ENCODE measurements at regions of chr10 and their contacts with region 1.

Region 1: GRCh38 chr10:49164559-49165188 is 23.5 kb downstream of the TMEM273 start:
- DNase-seq: no peak
- H3K4me3 ChIP-seq: no peak overlapping the region
- H3K4me3 Mint-ChIP-seq: no peak overlapping the region
- H3K27ac ChIP-seq: no peak overlapping the region
- H3K27ac Mint-ChIP-seq: peak overlapping the region in 3 of 7 donors; percentile 33 to 53 (median 33)
- H3K4me1 ChIP-seq: peaks cover 6% of the 10 kb centered on the region
- H3K4me1 Mint-ChIP-seq: peaks cover 2 to 26% (median 11%) of the 10 kb centered on the region in 4 donors
- H3K27me3 ChIP-seq: no peaks in the 10 kb centered on the region
- H3K27me3 Mint-ChIP-seq: no peaks in the 10 kb centered on the region

Region 2: DNA sequence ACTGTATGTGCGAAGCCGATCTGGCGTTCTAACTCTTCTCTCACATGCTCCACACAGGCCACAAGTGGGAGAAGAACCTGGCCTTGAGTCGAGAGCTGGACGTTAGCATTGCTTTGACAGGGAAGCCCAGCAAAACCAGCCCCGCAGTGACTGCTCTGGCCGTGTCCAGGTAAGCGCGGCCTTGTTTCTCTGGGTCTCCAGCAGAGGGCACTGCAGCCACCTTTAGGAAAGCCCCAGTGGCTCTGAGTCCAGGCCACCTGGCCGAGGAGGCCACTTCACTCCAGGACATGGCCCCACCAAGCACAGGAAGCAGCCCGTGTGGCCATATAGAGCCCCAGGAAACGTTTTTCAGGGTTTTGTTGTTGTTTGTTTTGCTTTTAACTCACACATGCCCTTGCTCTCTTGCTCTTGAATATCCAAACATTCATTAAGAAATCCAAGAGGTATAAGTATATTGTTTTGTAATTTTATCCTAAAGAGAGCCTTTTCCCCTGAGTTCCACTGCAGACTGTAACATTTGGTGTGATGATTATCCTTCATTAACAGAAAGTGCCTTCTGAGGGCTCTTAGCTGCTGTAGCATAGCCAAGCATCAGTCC is 183.3 kb before region 1 on chr10:
- CTCF ChIA-PET with region 1: interaction called, 12 read pairs
- POLR2A ChIA-PET with region 1: no interaction called
- intact Hi-C with region 1: no loop called
- DNase-seq: peak in 4 of 5 donors; percentile 12 to 25 (median 22)
- H3K4me3 ChIP-seq: no peak overlapping the region
- H3K4me3 Mint-ChIP-seq: no peak overlapping the region
- H3K27ac ChIP-seq: no peak overlapping the region
- H3K27ac Mint-ChIP-seq: no peak overlapping the region
- H3K4me1 ChIP-seq: no peaks in the 10 kb centered on the region
- H3K4me1 Mint-ChIP-seq: no peaks in the 10 kb centered on the region
- H3K27me3 ChIP-seq: no peaks in the 10 kb centered on the region
- H3K27me3 Mint-ChIP-seq: peaks cover 0 to 2% of the 10 kb centered on the region in 2 donors